Activated CD4-positive, alpha-beta T cell treated with anti-CD3 and anti-CD28 coated beads for 36 hours (primary cell): ENCODE measurements at regions of chr2 and their contacts with region 1.

Region 1: GRCh38 chr2:238203094-238203972 is at the start of gene ILKAP:
- DNase-seq: peak; percentile 95
- ATAC-seq: peak; percentile 98
- H3K4me3 Mint-ChIP-seq: peak within 1 kb of the TSS; percentile 83
- H3K27ac Mint-ChIP-seq: peak within 1 kb of the TSS; percentile 87
- H3K4me1 Mint-ChIP-seq: peaks cover 46% of the 10 kb centered on the region
- H3K27me3 Mint-ChIP-seq: no peaks in the 10 kb centered on the region
- total RNA-seq, gene ILKAP: 39.2 to 44.3 TPM

Region 2: GRCh38 chr2:237085248-237086221 is 1117.8 kb before region 1 on chr2 and contains the start of gene COPS8:
- CTCF ChIA-PET with region 1: no interaction called
- POLR2A ChIA-PET with region 1: no interaction called
- intact Hi-C with region 1: loop called in 1 of 2 experiments (anchors 5 kb)
- DNase-seq: peak; percentile 96
- ATAC-seq: peak; percentile 100
- H3K4me3 Mint-ChIP-seq: peak within 1 kb of the TSS; percentile 82
- H3K27ac Mint-ChIP-seq: peak within 1 kb of the TSS; percentile 91
- H3K4me1 Mint-ChIP-seq: peaks cover 12% of the 10 kb centered on the region
- H3K27me3 Mint-ChIP-seq: no peaks in the 10 kb centered on the region
- total RNA-seq, gene COPS8: 65.8 to 74.5 TPM

Region 3: DNA sequence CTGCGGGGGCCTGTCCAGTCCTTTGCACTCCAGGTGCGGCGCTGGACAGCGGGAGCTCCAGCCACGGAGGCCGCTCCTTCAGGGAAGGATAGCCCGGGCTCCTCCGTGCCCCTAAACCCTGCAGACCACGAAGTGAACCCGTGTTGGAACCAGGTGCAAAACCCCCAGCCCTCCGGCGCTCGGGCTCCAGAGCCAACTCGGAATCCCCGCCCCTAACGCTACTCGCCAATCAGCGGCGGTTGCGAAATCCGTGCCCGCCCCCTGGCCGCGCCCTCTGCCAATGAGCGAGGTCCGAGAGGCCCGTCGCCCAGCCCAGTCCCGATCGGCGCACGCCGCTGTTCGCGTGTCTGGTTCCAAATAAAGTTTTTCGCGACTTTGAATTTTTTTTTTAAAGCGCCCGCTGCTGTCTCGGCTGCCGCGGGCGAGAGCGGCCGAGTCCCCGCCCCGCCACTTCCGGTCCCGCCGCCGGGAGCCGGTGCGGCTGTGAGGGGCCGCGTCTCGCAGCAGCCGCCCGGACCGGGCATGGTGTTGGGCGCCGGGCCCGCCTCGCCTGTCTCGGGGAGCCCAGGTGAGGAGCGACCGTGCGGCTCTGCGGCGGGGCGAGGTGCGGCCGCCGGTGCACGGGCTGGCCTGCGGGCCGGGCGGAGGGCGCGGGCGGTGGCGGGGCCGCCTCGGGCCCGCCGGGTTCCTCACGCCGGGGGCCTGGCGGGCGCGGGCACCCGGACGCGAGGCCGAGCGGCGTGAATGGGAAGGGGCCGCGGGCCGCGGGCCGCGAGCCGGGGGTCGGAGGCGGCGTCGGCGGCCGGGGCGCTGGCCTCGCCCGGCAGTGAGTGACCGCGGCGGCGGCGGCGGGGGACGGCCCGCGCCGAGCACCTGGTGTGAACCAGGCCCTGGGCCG is 236.5 kb before region 1 on chr2 and contains the start of gene UBE2F:
- CTCF ChIA-PET with region 1: interaction called, 3 read pairs
- POLR2A ChIA-PET with region 1: interaction called, 3 read pairs
- intact Hi-C with region 1: loop called in 1 of 2 experiments (anchors 1 kb)
- DNase-seq: peak; percentile 98
- ATAC-seq: peak; percentile 95
- H3K4me3 Mint-ChIP-seq: peak within 1 kb of the TSS; percentile 78
- H3K27ac Mint-ChIP-seq: peak within 1 kb of the TSS; percentile 88
- H3K4me1 Mint-ChIP-seq: peaks cover 38% of the 10 kb centered on the region
- H3K27me3 Mint-ChIP-seq: no peaks in the 10 kb centered on the region
- total RNA-seq, gene UBE2F: 59.2 to 75.5 TPM

Region 4: GRCh38 chr2:238158527-238159070 is 44.7 kb before region 1 on chr2 and contains the start of gene ERFE:
- CTCF ChIA-PET with region 1: no interaction called
- POLR2A ChIA-PET with region 1: no interaction called
- intact Hi-C with region 1: loop called in 1 of 2 experiments (anchors 1 kb)
- DNase-seq: peak; percentile 77
- ATAC-seq: peak; percentile 88
- H3K4me3 Mint-ChIP-seq: peak within 1 kb of the TSS; percentile 61
- H3K27ac Mint-ChIP-seq: no peak within 1 kb of the TSS
- H3K4me1 Mint-ChIP-seq: peaks cover 5% of the 10 kb centered on the region
- H3K27me3 Mint-ChIP-seq: peaks cover 13% of the 10 kb centered on the region
- total RNA-seq, gene ERFE: 0.07 to 0.39 TPM

Region 5: DNA sequence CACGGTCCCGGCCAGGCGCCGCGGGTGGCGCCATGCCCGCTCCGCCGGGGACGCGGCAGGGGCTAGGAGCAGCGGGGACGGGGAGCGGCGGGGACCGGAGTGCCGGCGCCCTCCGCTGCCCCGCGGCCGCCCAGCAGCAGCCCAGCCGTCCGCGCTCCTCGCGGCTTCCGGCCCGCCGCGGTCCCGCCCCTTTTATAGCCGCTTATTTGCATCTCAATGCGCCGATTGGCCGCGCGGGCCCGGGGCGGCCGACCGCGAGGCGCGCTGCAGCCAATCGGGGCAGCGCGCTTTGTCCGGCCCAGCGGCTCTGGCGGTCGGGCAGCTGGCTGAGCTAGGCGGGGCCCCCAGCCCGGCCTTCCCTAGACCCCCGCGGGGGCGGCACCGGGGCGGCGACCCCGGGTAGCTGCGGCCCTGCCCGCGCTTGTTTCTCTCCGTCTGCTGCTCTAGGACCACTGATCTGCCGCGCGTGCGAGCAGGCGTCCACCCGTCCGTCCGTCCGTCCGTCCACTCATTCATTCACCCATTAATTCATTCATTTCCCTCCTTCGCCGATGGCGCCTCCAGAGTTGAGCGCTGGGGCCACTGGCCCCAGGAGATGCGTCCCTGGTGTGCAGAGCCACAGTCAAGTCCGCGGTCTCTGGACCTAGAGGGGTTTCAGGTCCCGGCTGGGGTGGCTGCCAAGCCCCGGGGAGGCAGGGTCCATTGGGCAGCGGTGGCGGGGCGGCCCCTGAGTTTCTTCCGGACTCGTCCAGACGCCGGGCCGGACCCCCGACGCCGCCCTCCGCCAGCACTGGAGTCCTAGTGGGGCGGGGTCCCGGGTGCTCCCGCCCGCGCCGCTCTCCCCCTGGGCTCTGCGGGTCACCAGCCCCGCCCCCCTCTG is 36.8 kb after region 1 on chr2 and contains the start of gene HES6:
- CTCF ChIA-PET with region 1: interaction called, 4 read pairs
- POLR2A ChIA-PET with region 1: no interaction called
- intact Hi-C with region 1: loop called in 1 of 2 experiments (anchors 1 kb)
- DNase-seq: peak; percentile 87
- ATAC-seq: peak; percentile 86
- H3K4me3 Mint-ChIP-seq: peak within 1 kb of the TSS; percentile 77
- H3K27ac Mint-ChIP-seq: no peak within 1 kb of the TSS
- H3K4me1 Mint-ChIP-seq: peaks cover 5% of the 10 kb centered on the region
- H3K27me3 Mint-ChIP-seq: peaks cover 21% of the 10 kb centered on the region
- total RNA-seq, gene HES6: 1.8 to 4.0 TPM

Region 6: GRCh38 chr2:238320246-238320647 is 116.9 kb after region 1 on chr2 and contains the start of gene TRAF3IP1:
- CTCF ChIA-PET with region 1: no interaction called
- POLR2A ChIA-PET with region 1: no interaction called
- intact Hi-C with region 1: loop called in 1 of 2 experiments (anchors 1 kb)
- DNase-seq: peak; percentile 91
- ATAC-seq: peak; percentile 96
- H3K4me3 Mint-ChIP-seq: peak within 1 kb of the TSS; percentile 70
- H3K27ac Mint-ChIP-seq: no peak within 1 kb of the TSS
- H3K4me1 Mint-ChIP-seq: peaks cover 23% of the 10 kb centered on the region
- H3K27me3 Mint-ChIP-seq: peaks cover 3% of the 10 kb centered on the region
- total RNA-seq, gene TRAF3IP1: 8.5 to 9.8 TPM